ENCODE measurements at regions of chr2 and their contacts with region 1.

Region 1: DNA sequence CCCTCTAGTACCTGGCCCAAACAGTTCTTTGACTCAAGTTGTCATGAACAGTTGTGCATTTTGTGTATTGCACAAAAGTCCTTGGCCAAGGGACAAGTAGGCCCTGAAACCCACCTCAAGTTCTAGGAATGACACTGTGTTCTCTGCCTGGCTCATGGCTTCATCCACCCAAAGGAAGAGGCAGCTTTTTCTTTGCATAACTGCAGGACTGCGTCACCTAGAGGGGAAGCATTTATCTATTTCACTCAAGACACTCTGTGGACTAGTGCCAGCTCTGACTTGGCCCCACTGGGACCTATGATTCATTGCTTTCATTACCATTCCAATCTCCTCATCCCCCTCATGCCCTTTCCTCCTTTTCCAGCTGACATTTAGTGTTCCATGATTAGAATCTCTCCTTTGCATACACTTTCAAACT is 119.3 kb upstream of the SIX2 start:
- DNase-seq: peak; percentile 94
- ATAC-seq: peak; percentile 95
- H3K4me3 ChIP-seq: no peak overlapping the region
- H3K27ac ChIP-seq: no peak overlapping the region
- H3K4me1 ChIP-seq: peaks cover 10% of the 10 kb centered on the region
- H3K27me3 ChIP-seq: peaks cover 4% of the 10 kb centered on the region; the same call in 1 of the 2 replicates
- CTCF ChIP-seq: no peak
- POLR2A ChIP-seq: no peak
- RAD21 ChIP-seq: 0 out of 2 replicates have a peak, but pooled peaks have one; percentile 19

Region 2: DNA sequence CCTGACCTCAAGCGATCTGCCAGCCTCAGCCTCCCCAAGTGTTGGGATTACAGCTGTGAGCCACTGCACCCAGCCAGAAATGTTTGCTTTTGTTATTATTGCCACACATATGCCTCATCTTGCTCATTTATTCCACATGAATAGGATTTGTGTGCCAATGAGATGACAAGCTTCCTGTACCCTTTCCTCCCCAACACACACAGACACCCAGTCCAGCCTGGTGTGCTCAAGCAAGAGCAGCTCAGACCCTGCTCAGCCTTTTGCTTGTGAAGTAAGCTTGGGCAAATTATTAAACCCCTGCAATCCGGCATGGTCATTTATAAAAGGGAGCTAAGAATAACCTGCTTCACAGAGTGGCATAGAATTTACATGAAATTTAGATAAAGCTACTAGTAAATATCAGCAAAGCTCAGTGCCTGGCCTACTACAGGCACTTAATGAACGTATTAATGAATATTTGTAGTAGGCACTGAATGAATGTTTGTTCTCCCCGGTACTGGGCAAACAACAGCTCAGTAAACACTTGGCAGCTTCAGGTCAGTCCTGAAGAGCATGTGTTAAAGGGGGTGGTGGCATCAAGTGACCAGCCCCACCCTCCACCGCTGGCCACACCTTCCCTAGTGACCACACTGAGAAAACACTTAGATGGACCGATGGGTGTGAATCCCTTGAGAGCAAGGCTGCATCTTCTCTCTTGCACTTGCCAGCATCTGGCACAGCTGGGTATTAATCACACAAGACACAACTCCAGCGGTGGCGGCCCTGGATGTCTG is 202.2 kb after region 1 on chr2:
- CTCF ChIA-PET with region 1: no interaction called
- POLR2A ChIA-PET with region 1: no interaction called
- dilution Hi-C with region 1: no loop called
- in situ Hi-C with region 1: no loop called
- intact Hi-C with region 1: loop called (anchors 10 kb)
- DNase-seq: peak; percentile 37
- ATAC-seq: no peak
- H3K4me3 ChIP-seq: no peak overlapping the region
- H3K27ac ChIP-seq: no peak overlapping the region
- H3K4me1 ChIP-seq: peaks cover 4% of the 10 kb centered on the region; the same call in 1 of the 2 replicates
- H3K27me3 ChIP-seq: peaks cover 17% of the 10 kb centered on the region
- CTCF ChIP-seq: no peak
- POLR2A ChIP-seq: no peak
- RAD21 ChIP-seq: no peak

Measured in IMR-90 (cell line).